SK-N-SH (cell line): ENCODE measurements at regions of chr12 and their contacts with region 1.

Region 1: GRCh38 chr12:6285063-6285477 is 25.4 kb upstream of the PLEKHG6 start:
- DNase-seq: peak; percentile 91
- H3K4me3 ChIP-seq: no peak overlapping the region; a peak in 1 of 4 replicates
- H3K27ac ChIP-seq: peak overlapping the region in 1 of 2 experiments; percentile 87; a peak in 3 of 4 replicates
- H3K4me1 ChIP-seq: peaks cover 6 to 35% of the 10 kb centered on the region in 2 experiments
- H3K27me3 ChIP-seq: no peaks in the 10 kb centered on the region
- CTCF ChIP-seq: peak; percentile 91
- EP300 ChIP-seq: no peak
- RAD21 ChIP-seq: peak; percentile 99

Region 2: DNA sequence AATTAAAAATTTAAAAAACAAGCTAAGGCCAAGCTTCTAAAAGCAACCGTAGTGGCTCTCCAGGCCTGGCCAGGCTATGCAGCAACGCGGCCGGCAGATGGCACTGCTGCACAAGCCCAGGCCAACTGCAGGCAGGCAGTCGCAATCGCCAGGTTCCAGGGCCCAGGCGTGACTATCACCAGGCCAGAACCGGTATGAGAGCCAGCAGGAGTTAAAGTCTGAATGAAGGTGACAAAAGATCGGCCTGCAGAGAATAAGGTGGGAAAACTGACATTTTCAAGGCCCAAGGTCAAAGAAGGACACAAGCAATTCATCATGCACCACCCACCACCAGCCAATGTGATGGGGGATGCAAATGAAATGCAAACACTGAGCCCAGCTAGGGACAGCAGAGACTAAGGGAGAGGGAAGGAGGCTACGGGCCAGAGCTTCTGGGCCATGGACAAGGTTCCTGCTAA is 296.4 kb before region 1 on chr12:
- CTCF ChIA-PET with region 1: interaction called, 99 read pairs
- POLR2A ChIA-PET with region 1: no interaction called
- DNase-seq: peak; percentile 85
- H3K4me3 ChIP-seq: peak overlapping the region in 1 of 2 experiments; percentile 52; a peak in 1 of 4 replicates
- H3K27ac ChIP-seq: no peak overlapping the region
- H3K4me1 ChIP-seq: peaks cover 0 to 3% of the 10 kb centered on the region in 2 experiments; a peak in 1 of 4 replicates
- H3K27me3 ChIP-seq: no peaks in the 10 kb centered on the region; the same call in 1 of the 2 replicates
- CTCF ChIP-seq: peak; percentile 97
- EP300 ChIP-seq: no peak
- RAD21 ChIP-seq: peak; percentile 94

Region 3: DNA sequence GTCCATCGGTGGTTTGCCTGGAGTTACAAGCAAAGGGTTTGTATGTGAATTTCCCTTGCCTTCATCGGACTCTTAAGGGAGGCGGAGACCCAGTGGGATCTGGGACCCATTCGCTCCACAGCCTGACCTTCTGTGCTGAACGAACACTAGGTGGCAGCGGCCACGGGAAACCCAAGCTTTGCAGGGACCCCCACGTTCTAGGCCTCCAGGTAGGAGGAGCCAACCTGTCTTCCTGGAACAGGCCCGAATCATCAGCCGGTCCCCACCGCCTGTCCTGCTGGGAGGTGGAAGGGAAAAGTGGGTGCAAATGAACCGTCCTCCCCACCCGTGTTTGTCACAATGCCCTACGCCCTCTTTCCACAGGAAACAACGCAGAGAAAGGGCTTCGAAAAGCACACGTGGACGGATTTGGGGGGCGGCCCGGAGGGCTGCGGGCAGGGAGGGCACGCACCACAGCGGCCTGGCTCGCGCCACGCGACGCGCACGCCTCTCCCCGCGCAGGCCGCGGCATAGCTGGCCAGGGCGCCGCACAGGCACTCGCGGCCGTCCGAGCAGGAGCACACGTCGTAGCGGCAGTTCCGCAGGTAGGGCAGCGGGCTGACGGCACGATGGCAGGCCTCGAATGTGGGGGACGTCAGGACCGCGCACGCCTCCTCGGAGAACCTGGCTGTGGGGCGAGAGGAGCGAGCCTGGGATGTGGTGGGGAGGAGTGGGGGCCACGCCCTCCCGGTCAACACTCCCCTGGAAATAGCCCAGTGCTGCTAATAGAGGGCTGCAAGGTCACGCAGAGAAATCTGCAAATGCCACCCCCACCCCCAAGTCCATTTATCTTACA is 228.4 kb before region 1 on chr12:
- CTCF ChIA-PET with region 1: interaction called, 121 read pairs
- POLR2A ChIA-PET with region 1: no interaction called
- DNase-seq: peak; percentile 74
- H3K4me3 ChIP-seq: no peak overlapping the region
- H3K27ac ChIP-seq: no peak overlapping the region; a peak in 1 of 4 replicates
- H3K4me1 ChIP-seq: peaks cover 4 to 25% of the 10 kb centered on the region in 2 experiments; a peak in 2 of 4 replicates
- H3K27me3 ChIP-seq: no peaks in the 10 kb centered on the region
- CTCF ChIP-seq: peak; percentile 49
- EP300 ChIP-seq: no peak
- RAD21 ChIP-seq: peak; percentile 42; the same call in 1 of the 2 replicates

Region 4: GRCh38 chr12:6084261-6084968 is 200.7 kb before region 1 on chr12:
- CTCF ChIA-PET with region 1: interaction called, 12 read pairs
- POLR2A ChIA-PET with region 1: no interaction called
- DNase-seq: peak; percentile 85
- H3K4me3 ChIP-seq: no peak overlapping the region
- H3K27ac ChIP-seq: peak overlapping the region; percentile 50 to 98
- H3K4me1 ChIP-seq: peaks cover 27 to 56% of the 10 kb centered on the region in 2 experiments; a peak in 3 of 4 replicates
- H3K27me3 ChIP-seq: no peaks in the 10 kb centered on the region
- CTCF ChIP-seq: no peak
- EP300 ChIP-seq: peak in 1 of 2 experiments; percentile 95; a peak in 3 of 4 replicates
- RAD21 ChIP-seq: peak; percentile 34

Region 5: GRCh38 chr12:6297170-6297569 is 12.1 kb after region 1 on chr12:
- CTCF ChIA-PET with region 1: interaction called, 11 read pairs
- POLR2A ChIA-PET with region 1: no interaction called
- DNase-seq: no peak
- H3K4me3 ChIP-seq: no peak overlapping the region
- H3K27ac ChIP-seq: no peak overlapping the region; a peak in 1 of 4 replicates
- H3K4me1 ChIP-seq: peaks cover 0 to 3% of the 10 kb centered on the region in 2 experiments; a peak in 1 of 4 replicates
- H3K27me3 ChIP-seq: no peaks in the 10 kb centered on the region
- CTCF ChIP-seq: no peak
- EP300 ChIP-seq: no peak
- RAD21 ChIP-seq: no peak